ENCODE measurements at regions of chr6 and their contacts with region 1.

Region 1: GRCh38 chr6:161292145-161292544 is 18.3 kb upstream of the AGPAT4 start:
- DNase-seq: no peak
- ATAC-seq: no peak

Region 2: GRCh38 chr6:161168281-161168891 is 123.8 kb before region 1 on chr6:
- intact Hi-C with region 1: loop called (anchors 10 kb)
- DNase-seq: no peak
- ATAC-seq: peak; percentile 35

Region 3: GRCh38 chr6:161195386-161195785 is 96.8 kb before region 1 on chr6:
- intact Hi-C with region 1: no loop called
- DNase-seq: no peak
- ATAC-seq: no peak

Region 4: DNA sequence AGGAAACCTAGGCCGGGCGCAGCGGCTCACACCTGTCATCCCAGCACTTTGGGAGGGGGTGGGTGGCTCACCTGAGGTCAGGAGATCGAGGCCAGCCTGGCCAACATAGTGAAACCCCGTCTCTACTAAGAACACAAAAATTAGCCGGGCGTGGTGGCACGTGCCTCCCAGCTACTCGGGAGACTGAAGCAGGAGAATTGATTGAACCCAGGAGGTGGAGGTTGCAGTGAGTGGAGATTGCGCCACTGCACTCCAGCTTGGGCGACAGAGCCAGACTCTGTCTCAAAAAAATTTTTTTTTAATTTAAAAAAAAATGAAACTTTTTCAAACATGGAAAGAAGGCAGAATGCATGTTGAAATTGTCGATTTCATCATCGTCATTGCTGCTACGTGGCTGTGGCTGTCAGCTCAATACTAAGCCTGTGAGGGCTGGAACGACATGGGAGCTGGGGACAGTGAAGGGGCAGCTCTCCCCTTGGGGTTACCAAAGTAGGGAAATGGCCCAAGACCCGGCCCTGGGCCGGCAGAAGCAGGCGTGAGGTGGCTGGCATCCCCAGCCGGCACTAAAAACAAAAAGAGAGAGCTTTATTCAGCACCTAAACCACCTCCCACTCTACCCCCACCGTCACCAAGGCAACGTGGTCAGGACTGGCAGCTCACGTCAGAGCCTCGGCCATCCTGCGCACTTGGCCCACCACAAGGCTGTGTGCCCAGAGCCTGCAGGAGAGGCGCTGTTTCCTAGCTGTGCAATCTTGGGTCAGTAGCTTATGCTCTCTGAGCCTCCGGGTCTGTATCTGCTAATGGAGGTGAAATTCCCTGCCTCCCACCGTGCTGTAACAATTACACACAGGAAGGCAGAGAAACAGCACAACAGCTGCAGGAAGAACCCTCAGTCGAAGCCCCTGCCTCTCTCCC is 49.1 kb before region 1 on chr6:
- intact Hi-C with region 1: no loop called
- DNase-seq: no peak
- ATAC-seq: no peak

Measured in Right ventricle myocardium inferior (tissue), 1 donor.